ENCODE measurements at regions of chr5 and their contacts with region 1.

Region 1: GRCh38 chr5:171342362-171343111 is 33.5 kb downstream of the TLX3 start:
- DNase-seq: peak; percentile 46
- H3K27ac ChIP-seq: no peak overlapping the region
- CTCF ChIP-seq: peak; percentile 68

Region 2: GRCh38 chr5:170809551-170809950 is 533.0 kb before region 1 on chr5:
- CTCF ChIA-PET with region 1: interaction called, 16 read pairs
- POLR2A ChIA-PET with region 1: no interaction called
- DNase-seq: peak; percentile 82
- H3K27ac ChIP-seq: no peak overlapping the region
- CTCF ChIP-seq: 0 out of 2 replicates have a peak, but pooled peaks have one; percentile 13

Region 3: GRCh38 chr5:170974461-170974860 is 368.1 kb before region 1 on chr5:
- CTCF ChIA-PET with region 1: no interaction called
- POLR2A ChIA-PET with region 1: no interaction called
- DNase-seq: no peak
- H3K27ac ChIP-seq: no peak overlapping the region
- CTCF ChIP-seq: no peak

Region 4: GRCh38 chr5:171330021-171330420 is 12.5 kb before region 1 on chr5:
- CTCF ChIA-PET with region 1: no interaction called
- POLR2A ChIA-PET with region 1: no interaction called
- DNase-seq: no peak
- H3K27ac ChIP-seq: no peak overlapping the region
- CTCF ChIP-seq: no peak

Region 5: GRCh38 chr5:171797543-171797942 is 455.0 kb after region 1 on chr5:
- CTCF ChIA-PET with region 1: no interaction called
- POLR2A ChIA-PET with region 1: no interaction called
- DNase-seq: no peak
- H3K27ac ChIP-seq: no peak overlapping the region
- CTCF ChIP-seq: no peak

Region 6: GRCh38 chr5:173155912-173156311 is 1813.4 kb after region 1 on chr5:
- CTCF ChIA-PET with region 1: no interaction called
- POLR2A ChIA-PET with region 1: no interaction called
- DNase-seq: no peak
- H3K27ac ChIP-seq: no peak overlapping the region
- CTCF ChIP-seq: no peak

Measured in RWPE1 (cell line).